CD4-positive, alpha-beta T cell (primary cell): ENCODE measurements at regions of chr19 and their contacts with region 1.

Region 1: GRCh38 chr19:5719961-5720790 is at the starts of genes CATSPERD and LONP1:
- DNase-seq: peak; percentile 95 to 100 (median 98)
- ATAC-seq: peak; percentile 86
- H3K4me3 ChIP-seq: peak within 1 kb of the TSS; percentile 69
- H3K4me3 Mint-ChIP-seq: peak within 1 kb of the TSS; percentile 94
- H3K27ac ChIP-seq: peak within 1 kb of the TSS; percentile 82 to 88
- H3K27ac Mint-ChIP-seq: peak within 1 kb of the TSS; percentile 96
- H3K4me1 ChIP-seq: peaks cover 34% of the 10 kb centered on the region
- H3K4me1 Mint-ChIP-seq: peaks cover 26% of the 10 kb centered on the region
- H3K27me3 ChIP-seq: no peaks in the 10 kb centered on the region
- H3K27me3 Mint-ChIP-seq: no peaks in the 10 kb centered on the region
- CTCF ChIP-seq: peak; percentile 83
- total RNA-seq, gene CATSPERD: not detected
- total RNA-seq, gene LONP1: 88.7 to 91.0 TPM

Region 2: GRCh38 chr19:5680437-5681368 is 39.5 kb before region 1 on chr19 and contains the starts of genes HSD11B1L and MICOS13:
- CTCF ChIA-PET with region 1: interaction called, 13 read pairs
- POLR2A ChIA-PET with region 1: interaction called, 29 read pairs
- intact Hi-C with region 1: loop called (anchors 1 kb)
- DNase-seq: peak; percentile 96 to 100 (median 98)
- ATAC-seq: peak; percentile 95
- H3K4me3 ChIP-seq: peak within 1 kb of the TSS; percentile 100
- H3K4me3 Mint-ChIP-seq: peak within 1 kb of the TSS; percentile 99
- H3K27ac ChIP-seq: peak within 1 kb of the TSS; percentile 89 to 100
- H3K27ac Mint-ChIP-seq: peak within 1 kb of the TSS; percentile 95
- H3K4me1 ChIP-seq: peaks cover 24% of the 10 kb centered on the region
- H3K4me1 Mint-ChIP-seq: peaks cover 30% of the 10 kb centered on the region
- H3K27me3 ChIP-seq: no peaks in the 10 kb centered on the region
- H3K27me3 Mint-ChIP-seq: no peaks in the 10 kb centered on the region
- CTCF ChIP-seq: no peak
- total RNA-seq, gene HSD11B1L: 2.4 to 2.9 TPM
- total RNA-seq, gene MICOS13: 21.7 to 23.0 TPM

Region 3: GRCh38 chr19:5690125-5690954 is 29.8 kb before region 1 on chr19 and contains the start of gene RPL36:
- CTCF ChIA-PET with region 1: interaction called, 20 read pairs
- POLR2A ChIA-PET with region 1: interaction called, 29 read pairs
- intact Hi-C with region 1: loop called (anchors 1 kb)
- DNase-seq: peak; percentile 95 to 100 (median 99)
- ATAC-seq: peak; percentile 65
- H3K4me3 ChIP-seq: peak within 1 kb of the TSS; percentile 100
- H3K4me3 Mint-ChIP-seq: peak within 1 kb of the TSS; percentile 96
- H3K27ac ChIP-seq: peak within 1 kb of the TSS; percentile 91 to 95
- H3K27ac Mint-ChIP-seq: peak within 1 kb of the TSS; percentile 96
- H3K4me1 ChIP-seq: peaks cover 54% of the 10 kb centered on the region
- H3K4me1 Mint-ChIP-seq: peaks cover 43% of the 10 kb centered on the region
- H3K27me3 ChIP-seq: no peaks in the 10 kb centered on the region
- H3K27me3 Mint-ChIP-seq: no peaks in the 10 kb centered on the region
- CTCF ChIP-seq: peak; percentile 98
- total RNA-seq, gene RPL36: 1,509 to 1,565 TPM